Calu3 (cell line): ENCODE measurements at regions of chr7 and their contacts with region 1.

Region 1: GRCh38 chr7:77542409-77542808 is 5.3 kb downstream of the PTPN12 start:
- DNase-seq: no peak
- H3K4me3 Mint-ChIP-seq: peak overlapping the region; percentile 43
- H3K27ac Mint-ChIP-seq: peak overlapping the region; percentile 23
- H3K4me1 Mint-ChIP-seq: peaks cover 24% of the 10 kb centered on the region
- H3K27me3 Mint-ChIP-seq: no peaks in the 10 kb centered on the region
- CTCF ChIP-seq: no peak

Region 2: GRCh38 chr7:77415823-77416622 is 126.4 kb before region 1 on chr7 and contains the start of gene GSAP:
- CTCF ChIA-PET with region 1: no interaction called
- intact Hi-C with region 1: no loop called
- DNase-seq: peak; percentile 67
- H3K4me3 Mint-ChIP-seq: peak within 1 kb of the TSS; percentile 70
- H3K27ac Mint-ChIP-seq: peak within 1 kb of the TSS; percentile 77
- H3K4me1 Mint-ChIP-seq: peaks cover 44% of the 10 kb centered on the region
- H3K27me3 Mint-ChIP-seq: no peaks in the 10 kb centered on the region
- CTCF ChIP-seq: no peak
- total RNA-seq, gene GSAP: 23.3 and 26.0 TPM in 2 replicates

Region 3: DNA sequence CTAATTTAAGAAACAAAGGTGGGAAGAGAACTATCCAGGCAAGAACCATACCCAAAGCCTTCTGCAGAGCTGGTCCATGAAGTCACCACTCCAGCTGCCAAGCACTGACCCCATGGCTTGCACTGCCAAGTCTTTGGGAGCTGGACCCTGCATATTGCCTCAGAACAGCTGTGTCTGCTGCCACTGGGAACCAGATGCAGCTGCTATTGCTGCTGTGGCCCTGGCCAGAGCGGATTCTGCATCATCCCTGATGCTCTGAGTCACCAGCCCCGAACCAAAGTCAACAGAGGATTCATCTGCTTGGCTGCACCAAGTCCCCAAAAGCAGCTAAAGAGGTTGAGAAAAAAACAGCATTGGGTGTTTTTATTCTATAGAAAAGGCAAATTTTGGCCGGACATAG is 87.1 kb before region 1 on chr7:
- CTCF ChIA-PET with region 1: interaction called, 5 read pairs
- intact Hi-C with region 1: loop called (anchors 5 kb)
- DNase-seq: no peak
- H3K4me3 Mint-ChIP-seq: no peak overlapping the region
- H3K27ac Mint-ChIP-seq: no peak overlapping the region
- H3K4me1 Mint-ChIP-seq: peaks cover 18% of the 10 kb centered on the region
- H3K27me3 Mint-ChIP-seq: no peaks in the 10 kb centered on the region
- CTCF ChIP-seq: no peak